ENCODE measurements at regions of chr4 and their contacts with region 1.

Region 1: DNA sequence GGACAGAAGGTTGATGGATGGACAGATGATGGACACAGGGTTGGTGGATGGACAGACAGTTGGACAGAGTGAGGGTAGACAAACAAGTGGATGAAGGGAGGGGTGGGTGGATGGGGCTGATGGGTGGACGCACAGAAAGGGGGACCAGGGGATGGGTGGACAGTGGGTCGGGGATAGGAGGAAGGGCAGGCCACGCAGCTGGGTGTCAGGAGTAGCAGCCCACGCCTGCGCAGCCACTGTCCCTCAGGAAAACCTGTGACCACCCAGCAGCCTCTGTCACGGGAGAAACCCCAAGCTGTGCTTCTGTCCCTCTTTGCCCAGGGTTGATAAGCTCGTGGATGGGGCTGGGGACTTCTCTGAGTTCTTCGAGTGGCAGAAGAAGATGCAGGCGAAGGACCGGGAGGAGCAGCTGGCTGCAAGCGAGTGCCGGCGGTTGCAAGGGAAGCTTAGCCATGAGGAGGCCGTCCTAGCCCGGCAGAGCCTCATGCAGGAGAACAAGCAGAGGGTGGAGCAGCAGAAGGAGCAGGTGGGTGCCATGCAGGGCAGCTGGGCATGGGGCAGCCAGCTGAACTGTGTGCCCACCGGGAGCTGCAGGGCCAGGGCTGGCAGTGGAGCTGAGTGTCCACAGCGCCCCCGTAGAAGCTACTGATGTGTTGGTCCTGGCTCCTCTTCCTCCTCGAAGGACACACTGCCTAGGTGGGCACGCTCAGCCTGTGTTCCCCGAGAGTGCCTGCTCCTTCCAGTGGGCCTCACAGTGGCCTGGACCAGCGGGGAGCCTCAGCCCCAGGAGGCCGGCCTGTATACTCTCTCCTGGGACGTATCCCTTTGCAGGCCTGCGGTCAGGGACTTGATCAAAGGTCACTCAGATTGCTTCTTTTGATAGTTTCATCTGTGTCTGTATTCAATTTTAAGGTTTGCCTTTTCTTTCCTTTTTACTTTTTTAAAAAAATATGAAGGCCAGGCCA is 16.8 kb upstream of the RNF4 start:
- DNase-seq: no peak
- H3K4me3 Mint-ChIP-seq: no peak overlapping the region
- H3K27ac Mint-ChIP-seq: no peak overlapping the region
- H3K4me1 Mint-ChIP-seq: no peaks in the 10 kb centered on the region
- H3K27me3 Mint-ChIP-seq: no peaks in the 10 kb centered on the region

Region 2: GRCh38 chr4:1792832-1793495 is 659.1 kb before region 1 on chr4 and contains the start of gene FGFR3:
- CTCF ChIA-PET with region 1: no interaction called
- POLR2A ChIA-PET with region 1: no interaction called
- intact Hi-C with region 1: no loop called
- DNase-seq: peak; percentile 35
- H3K4me3 Mint-ChIP-seq: no peak within 1 kb of the TSS
- H3K27ac Mint-ChIP-seq: no peak within 1 kb of the TSS
- H3K4me1 Mint-ChIP-seq: no peaks in the 10 kb centered on the region
- H3K27me3 Mint-ChIP-seq: peaks cover 13% of the 10 kb centered on the region
- total RNA-seq, gene FGFR3: 0.21 to 0.27 TPM

Region 3: DNA sequence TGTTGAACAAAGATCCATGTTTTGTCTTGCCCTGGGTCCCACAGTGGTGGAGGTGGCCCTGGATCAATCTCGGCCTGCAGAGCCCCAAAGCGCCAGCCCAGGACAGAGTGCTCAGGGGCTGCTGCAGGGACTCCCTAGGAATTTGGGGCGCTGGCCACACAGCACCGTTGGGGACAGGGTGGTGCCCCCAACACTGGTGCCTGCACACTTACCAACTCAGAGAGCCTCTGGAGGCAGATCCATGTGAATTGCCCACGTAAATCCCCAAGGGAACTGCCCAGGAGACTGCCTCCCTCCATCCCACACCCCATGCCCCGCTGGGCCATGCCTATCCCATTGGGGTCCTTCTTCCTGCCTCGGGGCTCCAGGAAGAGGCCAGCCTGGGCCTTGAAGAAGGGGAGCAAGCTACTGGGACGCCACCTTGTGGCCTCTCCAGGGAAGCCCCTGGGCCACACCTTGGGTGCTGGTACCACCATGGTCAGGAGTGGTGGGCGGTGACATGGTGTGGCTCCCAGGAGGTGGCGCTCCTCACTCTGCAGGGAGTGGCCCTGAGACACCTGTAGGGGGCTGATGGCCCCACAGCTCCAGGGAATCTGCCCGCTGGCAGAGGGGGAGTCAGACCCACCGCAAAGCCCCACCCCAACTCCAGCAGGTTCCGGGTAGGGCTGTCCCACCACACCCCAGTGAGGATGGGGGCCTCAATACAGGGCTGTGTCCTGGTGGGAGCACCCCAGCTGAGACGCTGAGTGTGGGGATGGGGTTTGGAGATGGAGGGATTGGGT is 10.5 kb before region 1 on chr4:
- CTCF ChIA-PET with region 1: interaction called, 17 read pairs
- POLR2A ChIA-PET with region 1: no interaction called
- intact Hi-C with region 1: no loop called
- DNase-seq: peak; percentile 90
- H3K4me3 Mint-ChIP-seq: no peak overlapping the region
- H3K27ac Mint-ChIP-seq: no peak overlapping the region
- H3K4me1 Mint-ChIP-seq: peaks cover 4% of the 10 kb centered on the region
- H3K27me3 Mint-ChIP-seq: no peaks in the 10 kb centered on the region

Measured in activated CD4-positive, alpha-beta memory T cell treated with anti-CD3 and anti-CD28 coated beads for 36 hours (primary cell).